ENCODE measurements at regions of chr1 and their contacts with region 1.

Region 1: GRCh38 chr1:40404670-40405462 is 31.3 kb downstream of the SMAP2 start:
- DNase-seq: peak; percentile 59
- ATAC-seq: peak; percentile 78
- H3K4me3 ChIP-seq: no peak overlapping the region
- H3K27ac ChIP-seq: no peak overlapping the region
- H3K4me1 ChIP-seq: peaks cover 9% of the 10 kb centered on the region; the same call in 1 of the 2 replicates
- H3K27me3 ChIP-seq: no peaks in the 10 kb centered on the region
- CTCF ChIP-seq: peak; percentile 81

Region 2: DNA sequence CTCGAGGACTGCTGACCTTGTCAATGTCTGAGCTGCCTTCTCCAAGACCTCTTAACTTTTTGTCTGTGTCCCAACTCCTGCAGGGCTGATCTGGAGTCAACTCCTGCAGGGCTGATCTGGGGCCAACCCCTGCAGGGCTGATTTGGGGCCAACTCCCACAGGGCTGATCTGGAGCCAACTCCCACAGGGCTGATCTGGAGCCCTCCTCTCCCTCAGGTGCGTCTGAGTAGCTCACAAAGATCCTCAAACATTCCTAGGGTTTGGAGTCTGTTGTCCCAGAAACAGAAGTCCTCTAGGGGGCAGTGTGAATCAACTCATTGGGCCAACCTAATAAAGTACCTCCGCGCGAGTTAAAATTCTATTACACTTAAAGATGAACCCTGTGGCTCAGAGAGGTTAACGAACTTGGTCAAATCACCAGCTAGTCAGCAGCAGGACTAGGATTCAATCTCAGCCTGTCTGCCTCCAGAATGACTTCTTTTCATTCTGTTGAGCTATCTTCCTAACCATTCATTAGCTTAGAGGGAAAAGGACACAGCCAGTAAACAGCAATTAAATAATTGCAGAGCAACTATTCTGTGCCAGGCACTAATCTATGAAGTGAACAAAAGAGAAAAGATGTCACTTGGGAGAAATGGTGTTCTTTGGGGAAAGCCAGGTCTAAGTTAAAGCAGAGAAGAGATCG is 260.8 kb before region 1 on chr1:
- CTCF ChIA-PET with region 1: interaction called, 5 read pairs
- POLR2A ChIA-PET with region 1: no interaction called
- in situ Hi-C with region 1: no loop called
- intact Hi-C with region 1: loop called (anchors 5 kb)
- DNase-seq: peak; percentile 43
- ATAC-seq: peak; percentile 95
- H3K4me3 ChIP-seq: no peak overlapping the region
- H3K27ac ChIP-seq: no peak overlapping the region
- H3K4me1 ChIP-seq: peaks cover 14% of the 10 kb centered on the region
- H3K27me3 ChIP-seq: peaks cover 26% of the 10 kb centered on the region
- CTCF ChIP-seq: peak; percentile 84

Region 3: GRCh38 chr1:40241362-40241761 is 163.5 kb before region 1 on chr1:
- CTCF ChIA-PET with region 1: interaction called, 15 read pairs
- POLR2A ChIA-PET with region 1: no interaction called
- in situ Hi-C with region 1: no loop called
- intact Hi-C with region 1: no loop called
- DNase-seq: no peak
- ATAC-seq: no peak
- H3K4me3 ChIP-seq: no peak overlapping the region
- H3K27ac ChIP-seq: no peak overlapping the region
- H3K4me1 ChIP-seq: no peaks in the 10 kb centered on the region
- H3K27me3 ChIP-seq: no peaks in the 10 kb centered on the region
- CTCF ChIP-seq: no peak

Region 4: GRCh38 chr1:40344597-40344996 is 60.3 kb before region 1 on chr1:
- CTCF ChIA-PET with region 1: interaction called, 9 read pairs
- POLR2A ChIA-PET with region 1: no interaction called
- in situ Hi-C with region 1: no loop called
- intact Hi-C with region 1: loop called (anchors 10 kb)
- DNase-seq: no peak
- ATAC-seq: peak; percentile 83
- H3K4me3 ChIP-seq: no peak overlapping the region
- H3K27ac ChIP-seq: no peak overlapping the region
- H3K4me1 ChIP-seq: no peaks in the 10 kb centered on the region
- H3K27me3 ChIP-seq: no peaks in the 10 kb centered on the region
- CTCF ChIP-seq: no peak

Measured in Panc1 (cell line).